Adrenal gland (tissue), 19 donors: ENCODE measurements at regions of chr3 and their contacts with region 1.

Region 1: GRCh38 chr3:188294823-188295487 is 141.0 kb downstream of the LPP start:
- DNase-seq: peak; percentile 42 to 75 (median 71)
- H3K4me3 ChIP-seq: no peak overlapping the region
- H3K27ac ChIP-seq: peak overlapping the region; percentile 66 to 87 (median 75)
- H3K4me1 ChIP-seq: peaks cover 18 to 73% of the 10 kb centered on the region in 2 donors
- H3K27me3 ChIP-seq: no peaks in the 10 kb centered on the region
- CTCF ChIP-seq: no peak
- POLR2A ChIP-seq: peak in 1 of 2 donors; percentile 42

Region 2: DNA sequence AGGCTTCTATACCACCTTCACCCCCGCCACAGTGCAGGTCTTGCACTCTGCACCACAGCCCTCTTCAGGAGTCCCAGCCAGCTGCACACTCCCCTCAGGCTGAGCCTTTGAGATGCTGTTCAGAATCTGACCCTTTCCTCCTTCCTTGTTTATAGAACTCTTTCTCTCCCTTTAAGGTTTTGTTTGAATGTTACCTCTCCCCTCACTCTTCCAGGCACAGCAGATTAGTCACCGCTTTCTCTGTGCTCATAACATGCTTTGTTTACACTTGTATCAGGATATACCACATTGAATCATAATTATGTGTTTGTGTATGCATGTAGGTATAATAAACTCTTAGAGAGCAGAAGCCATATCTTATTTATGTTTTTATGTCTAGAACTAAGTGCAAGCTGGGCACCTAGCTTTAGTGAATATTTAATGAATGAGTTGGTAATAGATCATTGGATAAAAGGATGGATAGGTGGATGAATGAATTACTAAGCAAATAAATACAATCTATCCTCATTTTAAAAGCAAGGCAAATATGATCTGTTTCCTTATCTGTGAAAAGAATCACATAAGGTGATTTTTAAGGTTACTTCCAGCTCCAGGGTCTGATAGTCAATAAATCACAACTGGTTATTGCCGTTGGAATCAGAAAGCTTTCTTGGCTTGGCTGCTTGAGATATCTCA is 381.2 kb before region 1 on chr3:
- intact Hi-C with region 1: no loop called
- DNase-seq: no peak
- H3K4me3 ChIP-seq: no peak overlapping the region
- H3K27ac ChIP-seq: no peak overlapping the region
- H3K4me1 ChIP-seq: peaks cover 18 to 50% of the 10 kb centered on the region in 2 donors
- H3K27me3 ChIP-seq: no peaks in the 10 kb centered on the region
- CTCF ChIP-seq: no peak
- POLR2A ChIP-seq: no peak

Region 3: GRCh38 chr3:188389711-188390342 is 94.9 kb after region 1 on chr3:
- intact Hi-C with region 1: loop called in 1 of 2 experiments (anchors 10 kb)
- DNase-seq: peak; percentile 46 to 84 (median 61)
- H3K4me3 ChIP-seq: no peak overlapping the region
- H3K27ac ChIP-seq: peak overlapping the region in 3 of 5 donors; percentile 47 to 59 (median 52)
- H3K4me1 ChIP-seq: peaks cover 10 to 26% of the 10 kb centered on the region in 2 donors
- H3K27me3 ChIP-seq: no peaks in the 10 kb centered on the region
- CTCF ChIP-seq: no peak
- POLR2A ChIP-seq: no peak